ENCODE measurements at regions of chr1 and their contacts with region 1.

Region 1: GRCh38 chr1:153572569-153573015 is 6.9 kb upstream of the S100A2 start:
- DNase-seq: peak in 7 of 9 experiments; percentile 27 to 60 (median 39)
- ATAC-seq: peak; percentile 52
- H3K4me3 ChIP-seq: no peak overlapping the region
- H3K4me3 Mint-ChIP-seq: no peak overlapping the region
- H3K27ac ChIP-seq: no peak overlapping the region
- H3K27ac Mint-ChIP-seq: no peak overlapping the region
- H3K4me1 ChIP-seq: peaks cover 3% of the 10 kb centered on the region
- H3K4me1 Mint-ChIP-seq: peaks cover 11% of the 10 kb centered on the region
- H3K27me3 ChIP-seq: no peaks in the 10 kb centered on the region
- H3K27me3 Mint-ChIP-seq: peaks cover 14% of the 10 kb centered on the region
- CTCF ChIP-seq: no peak

Region 2: GRCh38 chr1:153520230-153520629 is 52.4 kb before region 1 on chr1:
- CTCF ChIA-PET with region 1: interaction called, 237 read pairs
- POLR2A ChIA-PET with region 1: no interaction called
- intact Hi-C with region 1: no loop called
- DNase-seq: no peak
- ATAC-seq: no peak
- H3K4me3 ChIP-seq: no peak overlapping the region
- H3K4me3 Mint-ChIP-seq: no peak overlapping the region
- H3K27ac ChIP-seq: no peak overlapping the region
- H3K27ac Mint-ChIP-seq: no peak overlapping the region
- H3K4me1 ChIP-seq: no peaks in the 10 kb centered on the region
- H3K4me1 Mint-ChIP-seq: peaks cover 5% of the 10 kb centered on the region
- H3K27me3 ChIP-seq: no peaks in the 10 kb centered on the region
- H3K27me3 Mint-ChIP-seq: no peaks in the 10 kb centered on the region
- CTCF ChIP-seq: no peak

Region 3: GRCh38 chr1:153553830-153554541 is 18.6 kb before region 1 on chr1:
- CTCF ChIA-PET with region 1: interaction called, 17 read pairs
- POLR2A ChIA-PET with region 1: no interaction called
- intact Hi-C with region 1: loop called in 1 of 2 experiments (anchors 2 kb)
- DNase-seq: no peak
- ATAC-seq: no peak
- H3K4me3 ChIP-seq: no peak overlapping the region
- H3K4me3 Mint-ChIP-seq: no peak overlapping the region
- H3K27ac ChIP-seq: no peak overlapping the region
- H3K27ac Mint-ChIP-seq: no peak overlapping the region
- H3K4me1 ChIP-seq: no peaks in the 10 kb centered on the region
- H3K4me1 Mint-ChIP-seq: no peaks in the 10 kb centered on the region
- H3K27me3 ChIP-seq: no peaks in the 10 kb centered on the region
- H3K27me3 Mint-ChIP-seq: no peaks in the 10 kb centered on the region
- CTCF ChIP-seq: no peak

Region 4: GRCh38 chr1:153617675-153618074 is 45.1 kb after region 1 on chr1:
- CTCF ChIA-PET with region 1: interaction called, 7 read pairs
- POLR2A ChIA-PET with region 1: interaction called, 3 read pairs
- intact Hi-C with region 1: loop called (anchors 1 to 5 kb)
- DNase-seq: peak in 6 of 9 experiments; percentile 22 to 83 (median 70)
- ATAC-seq: peak; percentile 85
- H3K4me3 ChIP-seq: no peak overlapping the region
- H3K4me3 Mint-ChIP-seq: no peak overlapping the region
- H3K27ac ChIP-seq: no peak overlapping the region
- H3K27ac Mint-ChIP-seq: no peak overlapping the region
- H3K4me1 ChIP-seq: no peaks in the 10 kb centered on the region
- H3K4me1 Mint-ChIP-seq: peaks cover 5% of the 10 kb centered on the region
- H3K27me3 ChIP-seq: no peaks in the 10 kb centered on the region
- H3K27me3 Mint-ChIP-seq: no peaks in the 10 kb centered on the region
- CTCF ChIP-seq: peak; percentile 46